Activated CD4-positive, alpha-beta memory T cell treated with anti-CD3 and anti-CD28 coated beads, Interleukin-2, amount 10 ng/mL, durations not matched to agents 7 days and 5 days (primary cell): ENCODE measurements at regions of chr19 and their contacts with region 1.

Region 1: DNA sequence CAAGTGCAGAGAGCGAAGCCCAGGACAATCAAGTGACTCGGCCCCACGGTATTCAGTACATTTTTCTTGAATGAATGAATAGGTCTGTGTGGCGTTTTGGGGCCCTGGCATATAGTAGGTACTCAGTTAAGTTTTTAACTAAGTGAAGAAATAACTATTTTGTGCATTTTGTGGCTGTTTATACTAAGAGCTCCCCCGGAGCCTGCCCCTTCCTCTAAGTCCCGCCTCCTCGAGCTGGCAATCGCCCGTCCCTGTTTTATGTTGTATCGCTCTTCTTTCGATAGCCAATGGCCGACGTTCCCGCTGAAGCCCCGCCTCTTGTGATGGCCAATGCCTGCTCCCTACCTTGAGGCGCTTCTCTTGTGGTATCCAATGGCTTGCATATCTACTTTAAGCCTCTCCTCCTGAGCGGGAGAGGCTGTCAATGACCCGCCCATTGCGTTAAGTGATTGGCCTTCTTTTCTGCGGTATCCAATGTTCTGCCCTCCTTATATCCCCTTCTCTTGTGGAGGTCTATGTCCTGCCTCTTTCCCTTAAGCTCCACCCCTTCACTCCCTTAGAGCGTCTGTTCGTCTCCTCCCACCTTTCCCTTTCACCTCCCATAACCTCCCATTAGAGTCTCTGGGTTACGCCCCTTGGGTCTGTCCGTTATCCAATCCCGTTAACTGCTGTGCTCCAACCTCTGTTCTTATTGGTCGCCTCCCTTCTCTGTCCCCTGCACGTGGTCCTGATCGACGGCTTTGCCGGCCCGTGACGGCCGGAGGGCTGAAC is 509 bp upstream of the HDGFL2 start:
- DNase-seq: peak; percentile 98
- H3K4me3 Mint-ChIP-seq: no peak overlapping the region
- H3K27ac Mint-ChIP-seq: no peak overlapping the region
- H3K4me1 Mint-ChIP-seq: peaks cover 27% of the 10 kb centered on the region
- H3K27me3 Mint-ChIP-seq: no peaks in the 10 kb centered on the region

Region 2: GRCh38 chr19:4457654-4458395 is 13.8 kb before region 1 on chr19 and contains the start of gene UBXN6:
- CTCF ChIA-PET with region 1: interaction called, 9 read pairs
- POLR2A ChIA-PET with region 1: interaction called, 32 read pairs
- DNase-seq: peak; percentile 98
- H3K4me3 Mint-ChIP-seq: peak within 1 kb of the TSS; percentile 90
- H3K27ac Mint-ChIP-seq: peak within 1 kb of the TSS; percentile 74
- H3K4me1 Mint-ChIP-seq: peaks cover 17% of the 10 kb centered on the region
- H3K27me3 Mint-ChIP-seq: no peaks in the 10 kb centered on the region
- total RNA-seq, gene UBXN6: 49.6 to 50.1 TPM